H1 (cell line): ENCODE measurements at regions of chr17 and their contacts with region 1.

Region 1: DNA sequence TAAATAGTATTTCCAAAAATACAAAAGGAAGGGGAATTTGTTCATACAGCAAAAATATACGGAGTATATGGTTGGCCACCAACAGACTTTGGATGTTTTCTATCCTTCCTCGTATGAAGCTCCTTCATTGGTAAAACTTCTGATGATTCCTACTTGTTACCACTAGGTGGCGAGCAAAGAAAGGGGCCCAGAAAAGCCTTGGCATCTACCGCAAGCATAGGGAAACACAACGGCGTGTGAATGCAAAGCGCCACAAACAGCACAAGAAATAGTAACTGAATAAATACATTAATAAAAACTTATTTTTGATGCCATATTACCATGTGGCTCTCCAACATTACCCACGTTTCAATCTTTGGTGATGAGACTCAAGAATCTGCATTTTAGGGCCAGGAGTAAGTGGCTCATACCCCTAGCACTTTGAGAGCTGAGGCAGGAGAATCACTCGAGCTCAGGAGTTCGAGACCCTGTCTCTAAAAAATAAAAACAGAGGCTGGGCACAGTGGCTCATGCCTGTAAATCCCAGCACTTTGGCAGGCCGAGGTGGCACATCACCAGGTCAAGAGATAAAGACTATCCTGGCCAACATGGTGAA is 34.5 kb downstream of the YWHAE start:
- DNase-seq: peak in 1 of 2 experiments; percentile 34
- H3K4me3 ChIP-seq: no peak overlapping the region
- H3K27ac ChIP-seq: no peak overlapping the region
- H3K4me1 ChIP-seq: peaks cover 0 to 12% (median 3%) of the 10 kb centered on the region in 4 experiments; a peak in 3 of 7 replicates
- H3K27me3 ChIP-seq: no peaks in the 10 kb centered on the region
- CTCF ChIP-seq: peak; percentile 28 to 77 (median 72)
- EP300 ChIP-seq: no peak
- POLR2A ChIP-seq: no peak
- RAD21 ChIP-seq: peak; percentile 76 to 79

Region 2: GRCh38 chr17:1379930-1380313 is 14.4 kb after region 1 on chr17:
- CTCF ChIA-PET with region 1: interaction called, 34 read pairs
- POLR2A ChIA-PET with region 1: interaction called, 22 read pairs
- DNase-seq: no peak
- H3K4me3 ChIP-seq: no peak overlapping the region
- H3K27ac ChIP-seq: no peak overlapping the region
- H3K4me1 ChIP-seq: peaks cover 0 to 3% (median 1%) of the 10 kb centered on the region in 4 experiments; a peak in 2 of 7 replicates
- H3K27me3 ChIP-seq: no peaks in the 10 kb centered on the region
- CTCF ChIP-seq: no peak
- EP300 ChIP-seq: no peak
- POLR2A ChIP-seq: no peak
- RAD21 ChIP-seq: no peak

Region 3: DNA sequence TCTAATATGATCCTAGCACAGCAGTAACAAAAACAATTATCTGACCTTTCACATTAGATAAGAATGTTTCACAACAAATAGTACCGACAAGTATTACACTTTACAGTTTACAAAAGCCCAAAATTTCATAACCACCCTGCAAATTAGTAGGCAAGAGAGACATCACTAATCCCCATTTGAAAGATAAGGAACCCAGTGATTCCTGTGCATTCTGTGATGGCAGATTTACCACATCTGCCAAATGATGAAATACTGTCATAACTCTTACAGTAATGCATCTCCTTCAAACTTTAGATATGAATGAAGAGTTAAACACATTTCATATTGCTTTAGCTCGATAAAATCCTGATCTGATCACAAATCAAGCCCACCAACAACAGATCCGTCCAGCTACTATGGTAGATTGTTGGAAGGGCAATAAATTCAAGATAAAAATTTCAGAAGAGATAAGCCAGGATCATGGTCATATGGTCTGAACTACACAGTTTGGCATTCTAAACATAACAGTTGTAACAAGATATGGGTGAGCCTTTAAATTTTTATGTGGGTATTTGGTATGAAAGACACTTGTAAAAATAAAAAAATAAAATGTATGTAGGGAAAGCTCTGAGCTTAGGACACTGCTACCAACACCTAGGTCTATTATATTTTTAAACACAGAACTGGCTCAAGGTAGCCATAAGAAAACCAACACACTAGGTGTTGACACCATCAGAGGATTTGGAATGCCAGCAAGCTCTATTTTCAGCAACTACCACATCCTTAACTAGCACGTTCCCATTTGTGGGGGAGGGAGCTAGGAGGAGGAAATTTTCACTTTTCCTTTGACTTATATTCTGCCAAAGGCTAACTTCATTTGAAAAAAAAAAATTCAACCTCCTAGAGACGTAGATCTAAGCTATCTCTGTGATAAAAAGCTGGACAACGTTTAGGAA is 25.2 kb after region 1 on chr17:
- CTCF ChIA-PET with region 1: interaction called, 35 read pairs
- POLR2A ChIA-PET with region 1: interaction called, 23 read pairs
- DNase-seq: no peak
- H3K4me3 ChIP-seq: no peak overlapping the region
- H3K27ac ChIP-seq: no peak overlapping the region
- H3K4me1 ChIP-seq: peaks cover 2 to 13% (median 11%) of the 10 kb centered on the region in 4 experiments; a peak in 5 of 7 replicates
- H3K27me3 ChIP-seq: no peaks in the 10 kb centered on the region
- CTCF ChIP-seq: no peak
- EP300 ChIP-seq: no peak
- POLR2A ChIP-seq: peak in 1 of 2 experiments; percentile 24; a peak in 1 of 3 replicates
- RAD21 ChIP-seq: no peak

Region 4: GRCh38 chr17:1422907-1423306 is 57.4 kb after region 1 on chr17:
- CTCF ChIA-PET with region 1: interaction called, 17 read pairs
- POLR2A ChIA-PET with region 1: interaction called, 4 read pairs
- DNase-seq: no peak
- H3K4me3 ChIP-seq: no peak overlapping the region
- H3K27ac ChIP-seq: no peak overlapping the region
- H3K4me1 ChIP-seq: no peaks in the 10 kb centered on the region
- H3K27me3 ChIP-seq: no peaks in the 10 kb centered on the region
- CTCF ChIP-seq: no peak
- EP300 ChIP-seq: no peak
- POLR2A ChIP-seq: no peak
- RAD21 ChIP-seq: no peak

Region 5: DNA sequence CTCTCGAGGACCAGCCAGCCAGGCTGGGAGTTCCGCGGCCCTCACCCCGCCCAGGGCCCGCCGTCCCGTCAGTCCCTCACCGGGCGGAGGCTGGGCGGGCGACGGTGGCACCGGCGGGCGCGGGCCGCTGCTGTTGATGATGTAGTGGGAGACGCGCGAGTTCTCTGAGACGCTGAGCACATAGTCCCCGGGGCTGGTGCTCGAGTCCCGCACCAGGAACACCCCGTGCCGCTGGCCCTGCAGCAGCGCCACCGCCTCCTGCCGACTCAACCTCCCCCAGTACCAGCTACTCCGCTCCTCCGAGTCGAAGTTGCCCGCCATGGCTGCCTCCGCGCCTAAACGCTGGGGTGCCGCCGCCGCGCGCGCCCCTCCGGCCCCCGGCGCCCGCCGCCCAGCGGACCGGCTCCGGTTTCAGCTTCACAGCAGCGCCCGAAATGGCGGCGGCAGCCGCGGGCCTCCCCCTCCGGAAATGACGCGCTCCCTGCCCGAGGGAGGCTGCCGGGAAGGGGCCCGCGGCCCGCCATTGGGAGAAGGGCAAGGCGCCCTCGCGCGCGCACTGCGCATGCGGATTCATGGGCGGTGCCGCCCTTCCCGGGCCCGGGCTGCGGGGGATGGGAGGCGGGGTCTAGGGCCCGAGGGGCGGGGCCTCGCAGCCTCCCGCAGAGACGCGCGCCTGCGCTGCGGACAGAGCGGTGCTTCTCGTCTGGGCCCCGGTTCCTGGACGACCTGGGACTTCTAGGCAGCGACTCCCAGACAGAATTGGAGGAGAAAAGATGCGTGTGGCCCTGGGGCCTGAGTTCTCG is 90.5 kb after region 1 on chr17 and contains the start of gene CRK:
- CTCF ChIA-PET with region 1: interaction called, 15 read pairs
- POLR2A ChIA-PET with region 1: no interaction called
- DNase-seq: peak; percentile 85 to 99
- H3K4me3 ChIP-seq: peak within 1 kb of the TSS; percentile 75 to 92 (median 88)
- H3K27ac ChIP-seq: peak within 1 kb of the TSS; percentile 84
- H3K4me1 ChIP-seq: peaks cover 0 to 6% (median 3%) of the 10 kb centered on the region in 4 experiments; a peak in 3 of 7 replicates
- H3K27me3 ChIP-seq: no peaks in the 10 kb centered on the region
- CTCF ChIP-seq: no peak
- EP300 ChIP-seq: no peak
- POLR2A ChIP-seq: peak; percentile 74 to 79
- RAD21 ChIP-seq: no peak
- total RNA-seq, gene CRK: 51.9 and 57.1 TPM in 2 replicates

Region 6: GRCh38 chr17:1516388-1517161 is 151.0 kb after region 1 on chr17 and contains the start of gene INPP5K:
- CTCF ChIA-PET with region 1: interaction called, 12 read pairs
- POLR2A ChIA-PET with region 1: interaction called, 8 read pairs
- DNase-seq: peak; percentile 89 to 91
- H3K4me3 ChIP-seq: peak within 1 kb of the TSS; percentile 85 to 92 (median 90)
- H3K27ac ChIP-seq: peak within 1 kb of the TSS; percentile 75
- H3K4me1 ChIP-seq: peaks cover 0 to 6% (median 3%) of the 10 kb centered on the region in 4 experiments; a peak in 5 of 7 replicates
- H3K27me3 ChIP-seq: no peaks in the 10 kb centered on the region
- CTCF ChIP-seq: no peak
- EP300 ChIP-seq: peak in 1 of 2 experiments; percentile 2; a peak in 1 of 3 replicates
- POLR2A ChIP-seq: peak in 1 of 2 experiments; percentile 81; a peak in 2 of 3 replicates
- RAD21 ChIP-seq: no peak
- total RNA-seq, gene INPP5K: 20.4 and 21.0 TPM in 2 replicates